ENCODE measurements at regions of chr5 and their contacts with region 1.

Region 1: DNA sequence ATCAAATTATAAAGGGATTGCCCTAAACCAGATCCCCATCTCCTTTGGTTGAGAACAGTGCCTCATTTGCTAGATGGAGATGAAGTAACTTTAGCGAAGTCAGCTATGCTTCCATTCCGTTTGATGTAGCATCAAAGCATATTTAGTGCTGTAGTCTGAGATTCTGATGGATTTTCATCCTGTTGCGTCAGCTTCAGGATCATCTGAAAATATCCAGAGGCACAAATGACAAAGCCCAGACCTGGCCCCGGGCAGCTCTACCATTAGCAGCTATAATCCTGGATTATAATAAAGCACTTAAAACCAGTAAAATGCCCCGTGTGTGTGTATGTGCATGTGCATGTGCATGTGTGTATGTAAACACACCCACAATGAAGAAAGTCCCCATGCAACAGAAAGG is 44.7 kb downstream of the ERAP1 start:
- DNase-seq: no peak
- ATAC-seq: no peak
- H3K4me3 ChIP-seq: no peak overlapping the region
- H3K27ac ChIP-seq: no peak overlapping the region
- H3K4me1 ChIP-seq: no peaks in the 10 kb centered on the region
- H3K27me3 ChIP-seq: no peaks in the 10 kb centered on the region
- CTCF ChIP-seq: no peak
- EP300 ChIP-seq: no peak
- POLR2A ChIP-seq: no peak
- RAD21 ChIP-seq: no peak

Region 2: GRCh38 chr5:96781031-96781937 is 18.3 kb after region 1 on chr5:
- CTCF ChIA-PET with region 1: no interaction called
- POLR2A ChIA-PET with region 1: no interaction called
- RAD21 ChIA-PET with region 1: no interaction called
- SMC1A ChIA-PET with region 1: interaction called, 12 read pairs
- in situ Hi-C with region 1: no loop called
- intact Hi-C with region 1: no loop called
- DNase-seq: no peak
- ATAC-seq: no peak
- H3K4me3 ChIP-seq: no peak overlapping the region
- H3K27ac ChIP-seq: no peak overlapping the region
- H3K4me1 ChIP-seq: no peaks in the 10 kb centered on the region
- H3K27me3 ChIP-seq: no peaks in the 10 kb centered on the region
- CTCF ChIP-seq: no peak
- EP300 ChIP-seq: no peak
- POLR2A ChIP-seq: no peak
- RAD21 ChIP-seq: no peak

Region 3: DNA sequence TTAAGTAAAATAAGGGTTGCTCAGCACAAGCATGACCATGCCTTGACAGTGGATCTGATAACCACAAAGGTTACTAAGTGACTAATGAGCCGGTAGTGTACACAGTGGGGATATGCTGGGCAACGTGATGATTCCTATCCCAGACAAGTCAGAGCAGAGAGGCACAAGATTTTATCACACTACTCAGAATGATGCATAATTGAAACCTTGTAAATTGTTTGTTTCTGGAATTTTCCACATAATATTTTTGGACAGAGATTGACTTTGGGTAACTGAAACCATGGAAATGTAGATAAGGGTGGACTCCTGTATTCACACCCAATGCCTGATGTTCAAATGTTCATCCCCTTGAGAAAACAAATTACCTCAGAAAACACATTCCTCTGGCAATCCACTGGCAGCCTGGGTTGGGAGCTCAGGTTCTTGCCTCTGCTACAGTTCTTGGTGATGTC is 60.9 kb after region 1 on chr5:
- CTCF ChIA-PET with region 1: no interaction called
- POLR2A ChIA-PET with region 1: no interaction called
- RAD21 ChIA-PET with region 1: no interaction called
- SMC1A ChIA-PET with region 1: no interaction called
- in situ Hi-C with region 1: no loop called
- intact Hi-C with region 1: no loop called
- DNase-seq: no peak
- ATAC-seq: peak; percentile 99
- H3K4me3 ChIP-seq: no peak overlapping the region
- H3K27ac ChIP-seq: no peak overlapping the region
- H3K4me1 ChIP-seq: no peaks in the 10 kb centered on the region
- H3K27me3 ChIP-seq: no peaks in the 10 kb centered on the region
- CTCF ChIP-seq: no peak
- EP300 ChIP-seq: no peak
- POLR2A ChIP-seq: no peak
- RAD21 ChIP-seq: no peak

Measured in GM12878 (cell line).